MCF 10A (cell line): ENCODE measurements at regions of chr21 and their contacts with region 1.

Region 1: DNA sequence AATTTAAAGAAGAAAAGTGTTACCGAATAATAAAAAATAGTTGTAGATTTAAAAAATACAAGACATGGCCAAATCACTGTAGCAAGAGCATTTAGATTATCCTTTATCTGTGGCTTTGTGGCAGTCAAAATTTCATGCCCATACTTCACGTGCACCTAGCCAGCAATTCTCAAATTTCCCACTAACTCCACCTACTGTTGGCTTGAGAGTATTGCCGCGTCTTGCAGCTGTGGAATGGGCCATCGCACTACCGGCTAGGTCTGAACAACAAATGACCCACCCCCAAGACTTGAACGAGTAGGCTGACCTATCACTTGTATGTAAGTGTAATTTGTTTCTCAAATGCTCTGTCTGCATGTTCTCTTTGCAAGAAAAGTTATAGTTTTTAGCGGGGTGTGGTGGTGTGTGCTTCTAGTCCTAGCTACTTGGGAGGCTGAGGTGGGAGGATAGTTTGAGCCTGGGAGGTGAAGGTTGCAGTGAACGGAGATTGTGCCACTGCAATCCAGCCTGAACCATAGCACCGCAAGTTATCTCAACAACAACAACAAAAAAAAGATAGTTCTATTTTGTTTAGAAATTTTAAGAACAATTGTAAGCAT is 4.1 kb downstream of the KRTAP13-4 start:
- DNase-seq: peak; percentile 67
- H3K4me3 Mint-ChIP-seq: no peak overlapping the region
- H3K27ac Mint-ChIP-seq: no peak overlapping the region
- H3K4me1 Mint-ChIP-seq: peaks cover 6% of the 10 kb centered on the region
- H3K27me3 Mint-ChIP-seq: peaks cover 89% of the 10 kb centered on the region
- CTCF ChIP-seq: peak; percentile 44

Region 2: GRCh38 chr21:29849735-29850176 is 584.4 kb before region 1 on chr21:
- CTCF ChIA-PET with region 1: no interaction called
- POLR2A ChIA-PET with region 1: no interaction called
- intact Hi-C with region 1: no loop called
- DNase-seq: peak; percentile 69
- H3K4me3 Mint-ChIP-seq: no peak overlapping the region
- H3K27ac Mint-ChIP-seq: no peak overlapping the region
- H3K4me1 Mint-ChIP-seq: no peaks in the 10 kb centered on the region
- H3K27me3 Mint-ChIP-seq: no peaks in the 10 kb centered on the region
- CTCF ChIP-seq: peak; percentile 77

Region 3: DNA sequence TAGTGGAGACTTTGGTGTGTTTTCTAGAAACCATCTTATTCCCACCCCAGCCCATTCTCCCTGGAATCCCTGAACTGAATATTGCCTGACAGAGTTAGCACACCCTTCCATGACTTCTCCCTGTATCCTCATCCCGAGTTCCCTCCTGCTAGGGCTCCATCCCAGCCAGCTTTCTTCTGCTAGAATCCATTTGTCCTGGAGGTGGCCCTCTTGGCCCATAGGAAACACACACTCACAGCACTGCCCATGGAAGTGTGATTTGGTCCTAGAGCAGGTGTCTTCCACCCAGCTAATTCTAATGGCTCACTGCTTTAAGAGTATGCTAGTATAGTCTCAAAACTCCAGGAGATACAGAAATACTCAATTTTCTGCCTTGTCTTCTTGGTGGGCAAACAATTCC is 10.1 kb after region 1 on chr21:
- CTCF ChIA-PET with region 1: interaction called, 10 read pairs
- POLR2A ChIA-PET with region 1: no interaction called
- intact Hi-C with region 1: no loop called
- DNase-seq: no peak
- H3K4me3 Mint-ChIP-seq: no peak overlapping the region
- H3K27ac Mint-ChIP-seq: no peak overlapping the region
- H3K4me1 Mint-ChIP-seq: no peaks in the 10 kb centered on the region
- H3K27me3 Mint-ChIP-seq: peaks cover 42% of the 10 kb centered on the region
- CTCF ChIP-seq: no peak